ENCODE measurements at regions of chr3 and their contacts with region 1.

Region 1: GRCh38 chr3:169966428-169966950 is at the start of gene SEC62:
- DNase-seq: peak; percentile 94 to 95
- H3K4me3 ChIP-seq: peak within 1 kb of the TSS; percentile 43 to 62 (median 44)
- H3K27ac ChIP-seq: peak within 1 kb of the TSS; percentile 93 to 97 (median 96)
- H3K4me1 ChIP-seq: peaks cover 17 to 24% of the 10 kb centered on the region in 2 donors
- H3K27me3 ChIP-seq: no peaks in the 10 kb centered on the region
- CTCF ChIP-seq: peak in 4 of 6 experiments; percentile 49 to 67 (median 58)
- POLR2A ChIP-seq: peak; percentile 55 to 93
- total RNA-seq, gene SEC62: 90.9 to 124 (median 104) TPM

Region 2: DNA sequence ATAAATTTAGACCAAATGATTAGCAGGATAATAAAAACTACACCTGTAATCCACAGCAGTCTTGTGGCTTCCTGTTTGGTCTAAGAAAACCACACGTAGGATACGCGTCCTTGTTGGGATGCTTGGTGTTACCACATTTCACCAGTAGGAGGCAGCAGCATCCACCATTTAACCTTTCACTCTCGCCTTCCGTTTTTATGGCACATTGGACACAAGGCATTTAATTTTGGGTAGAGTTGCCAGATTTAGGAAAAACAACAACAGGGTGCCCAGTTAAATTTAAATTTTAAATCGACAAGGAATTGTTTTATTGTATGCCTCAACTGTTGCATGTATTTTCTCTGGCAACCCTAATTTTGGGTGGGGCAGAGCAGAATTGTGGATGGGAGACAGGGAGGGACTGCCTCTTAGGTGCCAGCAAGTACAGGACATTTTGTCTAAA is 103.0 kb before region 1 on chr3:
- intact Hi-C with region 1: loop called (anchors 5 kb)
- DNase-seq: peak; percentile 76 to 82
- H3K4me3 ChIP-seq: no peak overlapping the region
- H3K27ac ChIP-seq: no peak overlapping the region
- H3K4me1 ChIP-seq: peaks cover 0 to 3% of the 10 kb centered on the region in 2 donors
- H3K27me3 ChIP-seq: no peaks in the 10 kb centered on the region
- CTCF ChIP-seq: peak; percentile 72 to 98 (median 91)
- POLR2A ChIP-seq: no peak